Caco-2 (cell line): ENCODE measurements at regions of chr12 and their contacts with region 1.

Region 1: GRCh38 chr12:55619354-55620138 is 17.1 kb upstream of the OR10P1 start:
- DNase-seq: peak; percentile 68 to 88
- H3K4me3 ChIP-seq: no peak overlapping the region
- H3K4me3 Mint-ChIP-seq: no peak overlapping the region
- H3K27ac Mint-ChIP-seq: peak overlapping the region; percentile 31
- H3K4me1 ChIP-seq: no peaks in the 10 kb centered on the region
- H3K4me1 Mint-ChIP-seq: peaks cover 10% of the 10 kb centered on the region
- H3K27me3 ChIP-seq: no peaks in the 10 kb centered on the region
- H3K27me3 Mint-ChIP-seq: no peaks in the 10 kb centered on the region
- CTCF ChIP-seq: peak; percentile 54 to 75

Region 2: DNA sequence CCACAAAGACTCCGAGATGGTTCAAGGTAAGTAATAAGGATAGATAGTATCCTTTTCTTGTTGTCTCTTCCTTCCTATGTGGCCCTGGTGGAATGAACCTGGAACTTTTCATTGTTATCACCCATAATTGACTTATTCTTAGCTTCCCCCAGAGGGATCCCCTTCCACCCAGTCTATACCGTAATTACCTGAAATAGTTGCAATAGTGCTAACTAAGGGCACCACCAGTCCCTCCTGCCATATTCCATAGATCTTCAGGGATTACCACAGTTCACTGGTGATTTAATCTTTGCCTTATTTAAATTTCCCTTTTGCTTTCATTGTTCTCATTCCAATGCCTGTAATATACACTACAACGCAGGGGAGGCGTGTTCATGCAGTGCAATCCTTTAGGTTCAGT is 507.2 kb before region 1 on chr12:
- CTCF ChIA-PET with region 1: no interaction called
- POLR2A ChIA-PET with region 1: no interaction called
- intact Hi-C with region 1: no loop called
- DNase-seq: no peak
- H3K4me3 ChIP-seq: no peak overlapping the region
- H3K4me3 Mint-ChIP-seq: no peak overlapping the region
- H3K27ac Mint-ChIP-seq: no peak overlapping the region
- H3K4me1 ChIP-seq: no peaks in the 10 kb centered on the region
- H3K4me1 Mint-ChIP-seq: no peaks in the 10 kb centered on the region
- H3K27me3 ChIP-seq: no peaks in the 10 kb centered on the region
- H3K27me3 Mint-ChIP-seq: peaks cover 17% of the 10 kb centered on the region
- CTCF ChIP-seq: no peak

Region 3: GRCh38 chr12:55188974-55189556 is 430.5 kb before region 1 on chr12:
- CTCF ChIA-PET with region 1: interaction called, 4 read pairs
- POLR2A ChIA-PET with region 1: no interaction called
- intact Hi-C with region 1: loop called (anchors 1 kb)
- DNase-seq: peak; percentile 50 to 76
- H3K4me3 ChIP-seq: no peak overlapping the region
- H3K4me3 Mint-ChIP-seq: no peak overlapping the region
- H3K27ac Mint-ChIP-seq: no peak overlapping the region
- H3K4me1 ChIP-seq: no peaks in the 10 kb centered on the region
- H3K4me1 Mint-ChIP-seq: peaks cover 4% of the 10 kb centered on the region
- H3K27me3 ChIP-seq: no peaks in the 10 kb centered on the region
- H3K27me3 Mint-ChIP-seq: peaks cover 3% of the 10 kb centered on the region
- CTCF ChIP-seq: peak; percentile 54 to 73

Region 4: DNA sequence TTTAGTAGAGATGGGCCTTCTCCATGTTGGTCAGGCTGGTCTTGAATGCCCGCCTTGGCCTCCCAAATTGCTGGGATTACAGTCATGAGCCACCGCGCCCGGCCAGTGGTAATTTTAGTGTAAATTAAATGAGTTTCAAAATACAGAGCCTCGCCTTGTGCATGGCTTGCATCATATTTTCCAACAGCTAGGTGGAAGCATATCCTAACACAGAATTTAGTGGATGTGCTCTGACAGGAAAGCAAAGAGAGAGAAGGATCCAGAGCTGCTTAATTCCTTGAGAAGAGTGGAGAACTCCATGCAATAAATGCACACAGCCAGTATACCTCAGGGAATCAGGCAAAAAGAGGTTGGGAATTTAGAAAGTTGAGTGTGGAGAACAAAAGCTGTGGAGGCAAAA is 173.2 kb before region 1 on chr12:
- CTCF ChIA-PET with region 1: interaction called, 6 read pairs
- POLR2A ChIA-PET with region 1: no interaction called
- intact Hi-C with region 1: loop called (anchors 1 kb)
- DNase-seq: peak in 1 of 2 experiments; percentile 32
- H3K4me3 ChIP-seq: no peak overlapping the region
- H3K4me3 Mint-ChIP-seq: no peak overlapping the region
- H3K27ac Mint-ChIP-seq: no peak overlapping the region
- H3K4me1 ChIP-seq: no peaks in the 10 kb centered on the region
- H3K4me1 Mint-ChIP-seq: peaks cover 8% of the 10 kb centered on the region
- H3K27me3 ChIP-seq: no peaks in the 10 kb centered on the region
- H3K27me3 Mint-ChIP-seq: no peaks in the 10 kb centered on the region
- CTCF ChIP-seq: peak; percentile 25 to 51

Region 5: DNA sequence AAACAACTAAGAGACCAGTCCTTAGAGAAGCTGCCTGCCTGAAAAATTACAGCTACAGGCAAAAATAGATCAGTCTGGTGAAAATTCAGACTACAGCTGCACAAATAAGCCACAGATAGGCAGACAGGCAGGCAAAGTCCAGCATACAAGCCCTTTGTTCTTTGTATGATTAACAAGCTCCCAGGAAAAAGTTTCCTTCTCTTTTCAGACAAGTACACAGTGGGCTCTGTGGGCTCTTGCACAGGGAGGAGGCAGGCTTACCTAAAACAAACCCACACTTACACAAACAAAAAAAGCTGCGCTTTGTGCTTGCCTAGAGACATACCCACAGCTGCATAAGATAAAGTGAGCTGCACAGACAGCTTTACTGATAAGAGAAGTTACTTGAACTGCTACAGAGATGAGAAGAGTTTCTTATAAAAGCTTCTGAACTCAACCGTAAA is 119.7 kb before region 1 on chr12:
- CTCF ChIA-PET with region 1: interaction called, 4 read pairs
- POLR2A ChIA-PET with region 1: no interaction called
- intact Hi-C with region 1: loop called (anchors 1 kb)
- DNase-seq: peak; percentile 82 to 88
- H3K4me3 ChIP-seq: no peak overlapping the region
- H3K4me3 Mint-ChIP-seq: peak overlapping the region; percentile 41
- H3K27ac Mint-ChIP-seq: peak overlapping the region; percentile 83
- H3K4me1 ChIP-seq: peaks cover 44% of the 10 kb centered on the region
- H3K4me1 Mint-ChIP-seq: peaks cover 26% of the 10 kb centered on the region
- H3K27me3 ChIP-seq: no peaks in the 10 kb centered on the region
- H3K27me3 Mint-ChIP-seq: no peaks in the 10 kb centered on the region
- CTCF ChIP-seq: no peak

Region 6: DNA sequence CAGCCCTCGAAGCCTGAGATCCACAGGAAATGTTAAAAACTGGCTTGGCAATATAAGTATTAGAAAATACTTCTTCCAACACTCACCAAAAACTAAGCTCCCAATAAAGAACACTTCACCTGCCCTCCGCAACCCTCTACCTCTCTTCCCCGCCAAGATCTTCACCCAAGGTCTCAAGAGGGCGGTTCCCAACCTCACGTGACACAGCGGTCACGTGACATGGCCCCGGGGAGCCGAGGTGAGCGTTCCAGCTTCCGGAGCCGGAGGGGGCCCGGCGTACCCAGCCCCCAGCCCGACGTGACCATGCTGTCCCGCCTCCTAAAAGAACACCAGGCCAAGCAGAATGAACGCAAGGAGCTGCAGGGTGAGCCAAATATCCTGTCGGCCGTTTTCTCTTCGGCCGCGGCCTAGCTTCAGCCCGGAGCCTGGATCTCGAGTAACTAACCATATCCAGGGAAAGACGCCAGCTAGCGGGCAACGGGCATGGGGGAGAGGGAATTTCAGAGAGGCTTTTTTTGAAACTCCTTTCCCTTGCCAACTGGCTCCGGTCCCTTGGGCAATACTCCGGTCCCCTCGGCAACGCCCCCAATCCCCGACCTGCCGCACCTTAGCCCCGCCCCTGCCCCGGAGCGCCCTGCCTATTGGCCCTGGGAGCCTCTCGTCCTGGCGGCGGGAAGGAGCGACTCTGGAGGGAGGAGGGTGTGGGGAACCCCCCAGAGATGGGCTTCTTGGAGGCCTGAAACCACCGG is 96.5 kb after region 1 on chr12 and contains the start of gene BLOC1S1:
- CTCF ChIA-PET with region 1: no interaction called
- POLR2A ChIA-PET with region 1: no interaction called
- intact Hi-C with region 1: loop called (anchors 1 kb)
- DNase-seq: peak; percentile 93 to 95
- H3K4me3 ChIP-seq: peak within 1 kb of the TSS; percentile 55
- H3K4me3 Mint-ChIP-seq: peak within 1 kb of the TSS; percentile 69
- H3K27ac Mint-ChIP-seq: peak within 1 kb of the TSS; percentile 80
- H3K4me1 ChIP-seq: peaks cover 36% of the 10 kb centered on the region
- H3K4me1 Mint-ChIP-seq: no peaks in the 10 kb centered on the region
- H3K27me3 ChIP-seq: no peaks in the 10 kb centered on the region
- H3K27me3 Mint-ChIP-seq: peaks cover 7% of the 10 kb centered on the region
- CTCF ChIP-seq: no peak
- total RNA-seq, gene BLOC1S1: 59.4 and 73.7 TPM in 2 replicates